Activated CD4-positive, alpha-beta T cell treated with anti-CD3 and anti-CD28 coated beads, Interleukin-2, amount 10 ng/mL, durations not matched to agents 7 days and 5 days (primary cell): ENCODE measurements at regions of chr5 and their contacts with region 1.

Region 1: GRCh38 chr5:151068433-151069197 is 12.2 kb downstream of the TNIP1 start:
- DNase-seq: no peak
- H3K4me3 Mint-ChIP-seq: no peak overlapping the region
- H3K27ac Mint-ChIP-seq: no peak overlapping the region
- H3K4me1 Mint-ChIP-seq: peaks cover 70% of the 10 kb centered on the region
- H3K27me3 Mint-ChIP-seq: no peaks in the 10 kb centered on the region

Region 2: DNA sequence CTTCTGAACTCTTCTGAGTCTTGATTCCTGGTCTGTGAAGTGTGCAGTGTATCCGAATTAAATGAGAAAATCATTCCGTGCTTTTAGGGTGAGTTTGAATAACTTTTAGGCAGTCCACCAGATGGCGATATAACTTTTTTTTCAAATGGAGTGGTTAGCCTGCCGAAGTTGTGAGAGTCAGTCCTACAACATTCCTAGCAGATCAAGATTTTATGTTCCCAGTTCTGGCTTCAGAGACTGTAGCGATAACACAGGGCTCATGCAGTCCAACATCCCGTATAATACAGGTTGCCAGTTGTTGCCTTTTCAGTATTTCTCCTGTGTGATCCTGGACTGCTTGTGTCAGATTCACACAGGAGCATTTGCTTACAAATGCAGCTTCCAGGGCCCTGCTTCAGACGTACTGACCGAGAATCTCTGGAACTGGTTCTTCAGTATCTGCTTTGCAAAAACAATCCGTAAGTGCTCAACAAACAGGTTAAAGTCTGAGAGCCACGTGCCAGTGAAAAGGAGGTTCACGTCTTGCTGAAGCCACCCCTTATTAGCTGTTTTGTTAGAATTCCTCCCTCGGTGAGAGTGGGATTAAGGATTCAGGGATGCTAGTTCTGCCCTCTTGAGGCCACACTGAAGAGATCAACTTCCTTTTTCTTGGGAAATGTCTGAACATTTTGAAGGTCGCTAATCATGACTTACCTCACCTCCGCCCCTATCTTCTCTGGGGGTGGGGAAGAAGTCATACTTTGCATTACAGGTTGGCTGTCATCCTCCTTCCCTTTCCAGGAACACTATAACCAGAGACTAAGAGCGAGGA is 267.3 kb before region 1 on chr5:
- CTCF ChIA-PET with region 1: no interaction called
- POLR2A ChIA-PET with region 1: no interaction called
- DNase-seq: peak; percentile 36
- H3K4me3 Mint-ChIP-seq: no peak overlapping the region
- H3K27ac Mint-ChIP-seq: no peak overlapping the region
- H3K4me1 Mint-ChIP-seq: peaks cover 11% of the 10 kb centered on the region
- H3K27me3 Mint-ChIP-seq: peaks cover 2% of the 10 kb centered on the region

Region 3: GRCh38 chr5:151020304-151021110 is 48.1 kb before region 1 on chr5 and contains the start of gene GPX3:
- CTCF ChIA-PET with region 1: no interaction called
- POLR2A ChIA-PET with region 1: no interaction called
- DNase-seq: no peak
- H3K4me3 Mint-ChIP-seq: no peak within 1 kb of the TSS
- H3K27ac Mint-ChIP-seq: no peak within 1 kb of the TSS
- H3K4me1 Mint-ChIP-seq: peaks cover 21% of the 10 kb centered on the region
- H3K27me3 Mint-ChIP-seq: peaks cover 20% of the 10 kb centered on the region
- total RNA-seq, gene GPX3: not detected

Region 4: DNA sequence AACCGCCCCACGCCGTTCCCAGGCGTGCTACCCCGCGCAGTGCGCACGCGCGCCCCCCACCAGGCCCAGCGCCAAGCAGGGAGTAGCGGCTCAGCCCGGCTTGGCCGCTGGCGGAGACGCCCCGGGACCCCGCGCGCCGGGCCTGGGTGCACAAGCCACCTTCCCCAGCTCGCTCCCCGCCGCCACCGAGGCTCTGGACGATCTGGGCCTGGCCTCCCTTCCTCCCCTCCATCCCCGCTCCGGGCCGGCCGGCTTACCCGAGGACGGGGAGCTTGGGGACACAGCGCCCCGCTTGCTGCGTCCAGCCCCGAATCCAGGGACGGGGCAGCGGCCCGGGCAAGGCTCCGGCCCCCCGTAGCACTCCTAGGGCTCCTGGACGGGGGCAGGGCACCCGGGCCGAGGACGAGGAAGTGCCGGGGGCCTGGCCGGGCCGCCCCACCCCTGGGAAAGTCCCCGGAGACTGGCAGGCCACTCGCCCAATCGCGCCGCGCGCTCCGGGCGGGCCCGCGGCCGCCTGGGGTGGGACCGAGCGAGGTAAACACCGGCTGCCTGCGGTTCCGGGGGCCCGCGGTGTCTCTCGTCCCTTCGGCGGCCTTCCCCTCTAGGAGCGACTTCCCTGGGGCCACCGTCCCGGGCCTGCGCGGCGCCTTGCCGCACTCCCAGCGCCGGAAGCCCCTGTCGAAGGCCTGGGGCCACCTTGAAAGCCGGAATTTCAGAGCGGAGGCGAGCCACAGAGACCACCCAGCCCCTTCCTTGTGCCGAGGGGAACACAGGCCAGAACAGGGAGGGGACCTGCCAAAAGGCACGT is 12.2 kb after region 1 on chr5 and contains the start of gene TNIP1:
- CTCF ChIA-PET with region 1: interaction called, 10 read pairs
- POLR2A ChIA-PET with region 1: interaction called, 3 read pairs
- DNase-seq: peak; percentile 92
- H3K4me3 Mint-ChIP-seq: peak within 1 kb of the TSS; percentile 83
- H3K27ac Mint-ChIP-seq: peak within 1 kb of the TSS; percentile 88
- H3K4me1 Mint-ChIP-seq: peaks cover 82% of the 10 kb centered on the region
- H3K27me3 Mint-ChIP-seq: no peaks in the 10 kb centered on the region
- total RNA-seq, gene TNIP1: 127 TPM